ENCODE measurements at regions of chr11 and their contacts with region 1.

Region 1: DNA sequence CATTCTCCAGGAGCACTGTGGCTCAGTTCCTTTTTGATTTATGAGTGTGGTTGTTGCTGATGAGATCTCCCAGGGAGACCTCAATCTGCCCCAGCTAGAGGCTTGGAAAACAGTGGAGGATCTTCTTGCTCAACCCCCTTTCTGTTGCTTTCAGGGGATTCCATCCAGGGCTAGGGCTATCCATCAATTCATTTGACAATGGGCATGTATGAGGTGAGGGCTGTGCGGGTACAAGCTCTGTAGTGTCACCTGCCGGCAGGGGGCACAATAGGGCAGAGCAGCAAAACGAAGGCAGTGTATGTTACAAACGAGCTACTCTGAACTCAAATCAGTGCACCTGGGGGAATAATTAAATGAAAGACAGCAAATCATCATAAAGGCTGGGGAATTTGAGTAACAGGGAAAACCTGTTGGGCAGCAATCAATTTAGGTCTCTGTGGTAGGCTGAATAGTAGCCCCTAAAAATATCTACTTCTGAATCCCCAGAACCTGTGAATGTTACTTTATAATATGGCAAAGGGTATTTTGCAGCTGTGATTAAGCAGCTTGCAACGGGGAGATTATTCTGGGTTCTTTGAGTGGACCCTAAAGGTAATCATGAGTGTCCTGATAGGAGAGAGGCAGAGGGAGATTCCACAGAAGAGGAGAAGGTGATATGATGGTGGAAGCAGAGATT is 170.3 kb upstream of the ZBED5 start:
- H3K4me3 ChIP-seq: no peak overlapping the region
- H3K27ac ChIP-seq: no peak overlapping the region
- H3K4me1 ChIP-seq: no peaks in the 10 kb centered on the region
- CTCF ChIP-seq: no peak

Region 2: DNA sequence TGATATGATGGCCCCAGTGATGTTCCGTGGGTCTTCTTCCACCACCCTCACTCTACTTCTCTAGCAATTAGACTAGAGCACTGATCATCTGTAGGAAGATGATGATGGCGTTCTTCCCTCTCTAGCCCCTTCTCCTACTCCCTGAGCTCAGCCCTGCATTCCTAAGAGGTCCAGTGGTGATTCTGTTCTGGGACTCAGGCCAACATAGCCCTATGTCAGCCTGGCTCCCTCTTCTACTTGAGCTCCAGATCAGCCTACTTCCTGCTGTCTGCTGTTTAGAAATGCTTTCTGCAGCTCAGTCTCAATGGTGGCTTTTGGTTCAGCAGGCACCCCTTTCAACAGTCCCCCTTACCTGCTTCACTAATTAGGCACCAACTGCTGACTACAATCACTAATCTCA is 84.2 kb before region 1 on chr11:
- CTCF ChIA-PET with region 1: interaction called, 14 read pairs
- POLR2A ChIA-PET with region 1: no interaction called
- H3K4me3 ChIP-seq: no peak overlapping the region
- H3K27ac ChIP-seq: no peak overlapping the region
- H3K4me1 ChIP-seq: no peaks in the 10 kb centered on the region
- CTCF ChIP-seq: no peak

Region 3: GRCh38 chr11:10993640-10994039 is 34.5 kb before region 1 on chr11:
- CTCF ChIA-PET with region 1: no interaction called
- POLR2A ChIA-PET with region 1: no interaction called
- H3K4me3 ChIP-seq: no peak overlapping the region
- H3K27ac ChIP-seq: no peak overlapping the region
- H3K4me1 ChIP-seq: no peaks in the 10 kb centered on the region
- CTCF ChIP-seq: no peak

Region 4: GRCh38 chr11:11016068-11016467 is 12.1 kb before region 1 on chr11:
- CTCF ChIA-PET with region 1: interaction called, 12 read pairs
- POLR2A ChIA-PET with region 1: no interaction called
- H3K4me3 ChIP-seq: no peak overlapping the region
- H3K27ac ChIP-seq: no peak overlapping the region
- H3K4me1 ChIP-seq: no peaks in the 10 kb centered on the region
- CTCF ChIP-seq: no peak

Region 5: GRCh38 chr11:11157185-11157584 is 129.0 kb after region 1 on chr11:
- CTCF ChIA-PET with region 1: interaction called, 17 read pairs
- POLR2A ChIA-PET with region 1: no interaction called
- H3K4me3 ChIP-seq: no peak overlapping the region
- H3K27ac ChIP-seq: no peak overlapping the region
- H3K4me1 ChIP-seq: no peaks in the 10 kb centered on the region
- CTCF ChIP-seq: no peak

Region 6: DNA sequence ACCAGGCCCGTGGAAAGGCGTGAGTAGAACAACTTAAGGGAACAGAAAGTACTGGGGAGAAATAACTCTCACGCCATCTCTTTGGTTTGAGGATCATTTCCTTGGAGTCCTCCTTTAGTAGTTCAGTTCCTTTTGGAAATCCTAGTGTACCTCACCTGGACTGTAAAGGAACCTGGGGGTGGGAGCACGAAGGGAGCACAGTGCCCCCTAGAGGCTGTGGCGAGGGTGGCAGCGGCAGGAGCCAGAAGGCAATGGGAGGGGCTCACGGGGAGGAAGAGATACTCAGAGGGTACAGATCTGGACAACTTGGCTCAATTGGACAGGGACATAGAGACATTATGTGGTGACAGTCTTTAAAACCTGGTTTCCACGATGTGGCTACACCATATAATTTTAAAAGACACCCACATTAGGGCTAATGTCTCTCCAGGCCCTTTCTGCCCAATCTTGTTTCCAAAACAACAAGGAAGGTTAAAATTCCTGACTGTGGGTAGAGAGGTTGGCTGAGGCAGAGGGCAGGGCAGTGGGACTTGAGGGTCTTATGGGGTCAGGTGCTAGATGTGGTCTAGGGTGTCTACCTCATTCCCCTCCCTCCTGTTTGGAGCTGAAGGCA is 237.9 kb after region 1 on chr11:
- CTCF ChIA-PET with region 1: interaction called, 12 read pairs
- POLR2A ChIA-PET with region 1: no interaction called
- H3K4me3 ChIP-seq: no peak overlapping the region
- H3K27ac ChIP-seq: no peak overlapping the region
- H3K4me1 ChIP-seq: no peaks in the 10 kb centered on the region
- CTCF ChIP-seq: peak; percentile 43; the same call in 1 of the 2 replicates

Measured in HEK293 (cell line).